ENCODE measurements at regions of chr20 and their contacts with region 1.

Region 1: DNA sequence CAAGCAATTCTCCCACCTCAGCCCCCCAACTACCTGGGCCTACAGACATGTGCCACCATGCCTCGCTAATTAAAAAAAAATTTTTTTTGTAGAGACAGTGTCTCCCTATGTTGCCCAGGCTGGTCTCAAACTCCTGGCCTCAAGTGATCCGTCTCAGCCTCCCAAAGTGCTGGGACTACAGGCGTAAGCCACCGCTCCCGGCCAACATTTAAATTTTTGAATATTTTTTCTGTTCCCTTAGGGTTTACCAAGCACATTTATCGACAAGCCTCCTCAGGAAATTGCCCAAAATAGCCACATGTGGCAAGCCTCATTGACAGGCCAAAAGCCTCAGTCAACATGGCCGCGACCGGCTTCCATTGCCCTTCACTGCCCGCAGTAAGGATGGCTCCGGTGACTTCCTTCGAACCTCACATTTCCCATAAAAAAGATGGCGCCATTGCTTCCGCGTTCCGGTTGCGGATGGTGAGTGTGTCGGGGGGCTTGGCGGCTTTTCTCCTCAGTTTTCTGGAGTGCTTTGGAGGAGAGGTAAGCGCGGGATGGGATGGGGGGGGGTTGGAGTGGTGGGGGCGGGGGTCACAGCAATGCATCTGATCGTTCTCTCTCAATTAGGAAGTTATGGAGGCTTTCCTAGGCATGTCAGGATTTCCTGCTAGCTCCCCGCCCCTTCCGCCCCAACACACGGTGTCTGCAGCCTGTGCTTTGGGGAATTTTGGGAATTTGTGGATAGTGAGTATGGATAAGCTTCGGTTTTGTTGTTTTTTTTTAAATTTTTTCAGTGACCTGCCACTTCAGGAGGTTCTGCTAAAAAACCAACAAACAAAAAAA is at the start of gene SHLD1:
- DNase-seq: peak; percentile 87
- ATAC-seq: peak; percentile 95
- H3K4me3 ChIP-seq: peak within 1 kb of the TSS; percentile 72 to 98 (median 84)
- H3K4me3 Mint-ChIP-seq: peak within 1 kb of the TSS; percentile 93
- H3K27ac ChIP-seq: peak within 1 kb of the TSS; percentile 8 to 67
- H3K27ac Mint-ChIP-seq: peak within 1 kb of the TSS; percentile 96
- H3K4me1 ChIP-seq: peaks cover 5 to 13% of the 10 kb centered on the region in 2 donors
- H3K4me1 Mint-ChIP-seq: peaks cover 24% of the 10 kb centered on the region
- H3K27me3 ChIP-seq: no peaks in the 10 kb centered on the region
- H3K27me3 Mint-ChIP-seq: peaks cover 4% of the 10 kb centered on the region
- CTCF ChIP-seq: no peak
- total RNA-seq, gene SHLD1: 15.4 and 15.5 TPM in 2 replicates

Region 2: DNA sequence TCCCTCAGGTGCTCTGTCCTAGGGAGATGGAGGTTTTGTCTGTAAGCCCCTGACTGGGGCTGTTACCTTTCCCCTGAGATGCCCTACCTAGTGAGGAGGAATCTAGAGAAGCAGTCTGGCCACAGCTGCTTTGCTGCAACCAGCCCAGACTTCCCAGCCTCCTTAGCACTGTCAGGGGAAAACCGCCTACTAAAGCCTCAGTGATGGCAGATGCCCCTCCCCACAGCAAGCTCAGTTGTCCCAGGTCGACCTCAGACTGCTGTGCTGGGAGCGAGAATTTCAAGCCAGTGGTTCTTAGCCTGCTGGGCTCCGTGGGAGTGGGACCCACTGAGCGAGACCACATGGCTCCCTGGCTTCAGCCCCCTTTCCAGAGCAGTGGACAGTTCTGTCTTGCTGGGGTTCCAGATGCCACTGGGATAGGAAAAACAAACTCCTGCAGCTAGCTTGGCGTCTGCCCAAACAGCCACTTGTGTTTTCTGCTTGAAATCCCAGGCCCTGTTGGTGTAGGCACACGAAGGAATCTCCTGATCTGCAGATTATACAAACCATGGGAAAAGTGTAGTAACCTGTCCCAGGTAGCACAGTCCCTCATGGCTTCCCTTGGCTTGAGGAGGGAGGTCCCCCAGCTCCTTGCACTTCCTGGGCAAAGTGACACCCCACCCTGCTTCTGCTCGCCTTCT is 287.0 kb before region 1 on chr20:
- CTCF ChIA-PET with region 1: no interaction called
- POLR2A ChIA-PET with region 1: no interaction called
- intact Hi-C with region 1: no loop called
- DNase-seq: no peak
- ATAC-seq: no peak
- H3K4me3 ChIP-seq: no peak overlapping the region
- H3K4me3 Mint-ChIP-seq: no peak overlapping the region
- H3K27ac ChIP-seq: no peak overlapping the region
- H3K27ac Mint-ChIP-seq: no peak overlapping the region
- H3K4me1 ChIP-seq: no peaks in the 10 kb centered on the region
- H3K4me1 Mint-ChIP-seq: no peaks in the 10 kb centered on the region
- H3K27me3 ChIP-seq: peaks cover 0 to 28% (median 0%) of the 10 kb centered on the region in 4 experiments
- H3K27me3 Mint-ChIP-seq: peaks cover 49% of the 10 kb centered on the region
- CTCF ChIP-seq: no peak

Region 3: GRCh38 chr20:5524626-5525295 is 225.4 kb before region 1 on chr20:
- CTCF ChIA-PET with region 1: no interaction called
- POLR2A ChIA-PET with region 1: no interaction called
- intact Hi-C with region 1: no loop called
- DNase-seq: no peak
- ATAC-seq: no peak
- H3K4me3 ChIP-seq: no peak overlapping the region
- H3K4me3 Mint-ChIP-seq: no peak overlapping the region
- H3K27ac ChIP-seq: no peak overlapping the region
- H3K27ac Mint-ChIP-seq: no peak overlapping the region
- H3K4me1 ChIP-seq: peaks cover 5 to 9% of the 10 kb centered on the region in 2 donors
- H3K4me1 Mint-ChIP-seq: peaks cover 8% of the 10 kb centered on the region
- H3K27me3 ChIP-seq: no peaks in the 10 kb centered on the region
- H3K27me3 Mint-ChIP-seq: no peaks in the 10 kb centered on the region
- CTCF ChIP-seq: no peak

Region 4: DNA sequence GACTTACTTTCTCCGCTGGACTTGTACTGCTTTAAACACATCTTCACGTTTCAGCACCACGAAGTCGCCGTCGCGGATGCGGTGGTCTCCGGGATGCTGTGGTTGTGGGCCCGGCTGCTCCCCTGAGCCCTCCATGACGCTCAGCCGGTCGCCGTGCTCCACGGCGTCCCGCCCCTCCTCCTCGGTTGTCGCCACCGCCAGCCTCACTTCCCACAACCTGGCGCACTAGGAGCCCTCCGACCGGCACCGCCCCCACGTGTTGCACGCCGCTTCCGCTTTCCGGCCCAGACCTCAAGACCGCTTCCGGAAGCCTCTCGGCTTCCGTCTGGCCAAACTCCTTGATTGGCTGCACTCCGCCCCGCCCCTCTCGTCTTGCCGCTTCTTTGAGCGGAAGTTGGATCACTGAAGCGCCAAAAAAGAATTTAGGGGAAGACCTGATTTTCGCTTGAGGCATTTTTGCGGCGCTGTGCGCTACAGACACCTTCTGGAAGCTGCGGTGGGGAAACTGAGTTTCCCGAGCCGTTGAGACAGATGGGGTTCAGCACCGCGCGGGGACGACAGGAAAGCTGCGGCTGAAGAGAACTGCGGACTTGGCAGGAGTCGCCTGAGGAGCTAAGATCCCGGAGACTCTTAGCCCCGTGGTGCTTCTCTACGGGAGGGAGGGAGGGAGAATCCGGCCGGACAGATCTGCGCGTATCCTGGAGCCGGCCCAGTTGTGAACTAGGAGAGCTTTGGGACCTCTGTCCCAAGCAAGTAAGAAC is 200.3 kb after region 1 on chr20 and contains the starts of genes MCM8 and TRMT6:
- CTCF ChIA-PET with region 1: no interaction called
- POLR2A ChIA-PET with region 1: no interaction called
- intact Hi-C with region 1: loop called (anchors 1 kb)
- DNase-seq: peak; percentile 98
- ATAC-seq: peak; percentile 98
- H3K4me3 ChIP-seq: peak within 1 kb of the TSS; percentile 77 to 88 (median 85)
- H3K4me3 Mint-ChIP-seq: peak within 1 kb of the TSS; percentile 94
- H3K27ac ChIP-seq: peak within 1 kb of the TSS; percentile 74 to 90
- H3K27ac Mint-ChIP-seq: peak within 1 kb of the TSS; percentile 95
- H3K4me1 ChIP-seq: peaks cover 14 to 18% of the 10 kb centered on the region in 2 donors
- H3K4me1 Mint-ChIP-seq: peaks cover 21% of the 10 kb centered on the region
- H3K27me3 ChIP-seq: no peaks in the 10 kb centered on the region
- H3K27me3 Mint-ChIP-seq: no peaks in the 10 kb centered on the region
- CTCF ChIP-seq: no peak
- total RNA-seq, gene MCM8: 13.7 and 13.8 TPM in 2 replicates
- total RNA-seq, gene TRMT6: 14.2 and 18.2 TPM in 2 replicates

Measured in B cell (primary cell).